ENCODE measurements at regions of chr11 and their contacts with region 1.

Region 1: GRCh38 chr11:123062158-123062891 is 389 bp upstream of the HSPA8 start:
- DNase-seq: peak; percentile 88 to 99 (median 92)
- ATAC-seq: peak; percentile 95
- H3K4me3 ChIP-seq: peak overlapping the region; percentile 89
- H3K27ac ChIP-seq: peak overlapping the region; percentile 100
- H3K4me1 ChIP-seq: peaks cover 3 to 17% of the 10 kb centered on the region in 2 experiments; a peak in 3 of 5 replicates
- H3K27me3 ChIP-seq: no peaks in the 10 kb centered on the region
- CTCF ChIP-seq: no peak
- EP300 ChIP-seq: peak; percentile 33; the same call in 1 of the 2 replicates
- POLR2A ChIP-seq: no peak
- RAD21 ChIP-seq: no peak

Region 2: GRCh38 chr11:122727101-122727929 is 335.0 kb before region 1 on chr11:
- CTCF ChIA-PET with region 1: no interaction called
- POLR2A ChIA-PET with region 1: no interaction called
- in situ Hi-C with region 1: no loop called
- intact Hi-C with region 1: no loop called
- DNase-seq: no peak
- ATAC-seq: no peak
- H3K4me3 ChIP-seq: no peak overlapping the region
- H3K27ac ChIP-seq: no peak overlapping the region
- H3K4me1 ChIP-seq: no peaks in the 10 kb centered on the region
- H3K27me3 ChIP-seq: peaks cover 0 to 21% of the 10 kb centered on the region in 2 experiments; a peak in 4 of 5 replicates
- CTCF ChIP-seq: no peak
- EP300 ChIP-seq: no peak
- POLR2A ChIP-seq: no peak
- RAD21 ChIP-seq: no peak

Region 3: DNA sequence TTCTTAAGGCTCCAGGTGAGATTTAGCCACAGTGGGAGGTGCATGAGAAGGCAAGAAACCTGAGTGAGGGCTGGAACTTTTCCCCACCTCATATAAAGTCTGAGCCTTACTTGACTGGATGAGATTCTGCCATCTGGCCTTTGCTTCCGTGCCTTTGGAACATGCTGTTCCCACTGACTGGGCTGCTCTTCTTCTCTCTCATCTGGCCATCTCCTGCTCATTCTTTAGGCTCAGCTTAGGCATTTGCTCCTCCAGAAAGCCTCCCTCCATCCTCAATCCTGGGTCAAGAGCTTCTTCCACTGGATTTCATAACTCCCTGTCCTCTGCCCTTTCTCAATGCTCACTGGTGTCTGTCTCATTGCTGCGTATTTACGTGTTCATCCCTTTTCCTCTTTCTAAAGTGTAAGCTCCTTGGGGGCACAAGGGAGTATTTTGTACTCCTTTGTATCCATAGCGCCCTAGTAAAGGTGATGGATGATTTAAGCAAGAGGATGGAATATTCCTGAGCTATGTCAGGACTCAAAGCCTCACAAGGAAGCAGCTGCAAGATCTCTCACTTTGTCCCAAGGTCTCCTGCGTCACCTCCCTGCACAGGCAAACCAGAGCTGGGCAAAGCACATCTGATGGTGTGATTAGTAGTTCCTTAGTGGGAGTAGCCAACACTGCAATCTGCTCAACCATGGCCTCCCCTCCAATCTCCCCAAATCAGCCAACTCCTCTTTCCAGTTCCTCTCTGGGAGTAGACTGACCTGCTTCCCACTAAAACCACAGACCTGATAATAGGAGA is 15.7 kb before region 1 on chr11:
- CTCF ChIA-PET with region 1: no interaction called
- POLR2A ChIA-PET with region 1: interaction called, 20 read pairs
- in situ Hi-C with region 1: no loop called
- intact Hi-C with region 1: no loop called
- DNase-seq: no peak
- ATAC-seq: peak; percentile 25; the same call in 2 of the 3 replicates
- H3K4me3 ChIP-seq: no peak overlapping the region
- H3K27ac ChIP-seq: no peak overlapping the region
- H3K4me1 ChIP-seq: no peaks in the 10 kb centered on the region
- H3K27me3 ChIP-seq: peaks cover 21 to 33% of the 10 kb centered on the region in 2 experiments; a peak in 4 of 5 replicates
- CTCF ChIP-seq: no peak
- EP300 ChIP-seq: no peak
- POLR2A ChIP-seq: no peak
- RAD21 ChIP-seq: no peak

Region 4: DNA sequence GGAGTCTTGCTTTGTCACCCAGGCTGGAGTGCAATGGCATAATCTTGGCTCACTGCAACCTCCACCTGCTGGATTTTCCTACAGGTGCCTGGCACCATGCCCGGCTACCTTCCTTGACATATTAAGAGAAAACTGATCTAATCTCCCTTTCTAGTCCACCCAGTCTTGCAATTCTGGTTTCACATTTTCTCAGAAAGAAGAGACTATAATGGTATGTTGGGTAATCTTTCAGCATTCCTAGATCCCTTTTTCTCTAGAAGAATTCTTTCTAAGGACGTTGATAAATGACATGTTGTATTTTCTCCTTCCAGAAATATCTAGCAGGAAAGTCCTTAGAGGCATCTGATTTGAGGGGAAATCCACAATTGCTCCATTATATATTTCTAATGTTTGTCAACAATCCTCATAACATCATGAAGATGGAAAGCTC is 10.0 kb after region 1 on chr11:
- CTCF ChIA-PET with region 1: no interaction called
- POLR2A ChIA-PET with region 1: interaction called, 20 read pairs
- in situ Hi-C with region 1: no loop called
- intact Hi-C with region 1: no loop called
- DNase-seq: no peak
- ATAC-seq: no peak
- H3K4me3 ChIP-seq: no peak overlapping the region
- H3K27ac ChIP-seq: no peak overlapping the region
- H3K4me1 ChIP-seq: peaks cover 10 to 17% of the 10 kb centered on the region in 2 experiments
- H3K27me3 ChIP-seq: no peaks in the 10 kb centered on the region
- CTCF ChIP-seq: no peak
- EP300 ChIP-seq: no peak
- POLR2A ChIP-seq: no peak
- RAD21 ChIP-seq: no peak